ENCODE measurements at regions of chr9 and their contacts with region 1.

Region 1: GRCh38 chr9:134024828-134025605 is at the start of gene BRD3OS:
- DNase-seq: peak; percentile 98
- H3K4me3 ChIP-seq: peak within 1 kb of the TSS; percentile 62 to 84 (median 76)
- H3K27ac ChIP-seq: no peak within 1 kb of the TSS
- H3K4me1 ChIP-seq: peaks cover 5% of the 10 kb centered on the region
- H3K27me3 ChIP-seq: no peaks in the 10 kb centered on the region
- CTCF ChIP-seq: no peak
- POLR2A ChIP-seq: peak; percentile 43
- total RNA-seq, gene BRD3OS: 15.4 and 18.2 TPM in 2 replicates

Region 2: DNA sequence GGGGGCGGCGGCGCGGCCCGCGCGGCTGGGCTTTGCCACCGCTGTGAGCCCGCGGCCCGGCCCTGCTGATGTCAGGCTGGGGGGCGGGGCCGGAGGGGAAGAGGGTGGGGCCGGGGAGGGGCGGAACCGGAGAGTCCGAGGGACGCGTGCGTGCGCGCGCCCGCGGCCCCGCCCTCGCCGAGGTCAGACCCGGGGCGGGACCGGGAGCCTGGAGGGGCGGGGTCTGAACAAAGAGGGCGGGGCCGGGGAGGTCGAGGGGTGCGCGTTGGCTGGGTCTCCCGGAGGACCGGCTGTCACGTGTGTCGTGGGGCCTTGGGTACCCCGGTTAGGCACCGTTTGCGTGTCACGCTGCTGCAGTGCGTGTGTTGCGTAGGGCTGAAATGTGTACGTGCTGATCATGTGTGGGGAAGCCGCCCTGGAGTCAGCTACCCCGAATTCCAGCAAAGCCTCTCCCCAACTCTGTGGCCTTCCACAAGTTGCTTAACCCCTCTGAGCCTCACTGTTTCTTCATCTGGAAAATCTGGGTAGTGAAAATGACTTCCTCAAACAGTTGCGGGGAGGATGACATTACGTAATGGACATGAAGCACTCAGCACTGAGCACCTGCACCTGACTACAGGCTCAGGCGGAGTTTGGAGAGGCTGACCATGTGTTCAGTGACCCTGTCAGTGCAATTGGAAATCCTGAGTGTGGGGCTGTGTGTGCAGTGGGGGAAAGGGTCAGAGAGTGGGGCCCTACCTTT is 903.6 kb before region 1 on chr9 and contains the start of gene RALGDS:
- CTCF ChIA-PET with region 1: no interaction called
- POLR2A ChIA-PET with region 1: no interaction called
- dilution Hi-C with region 1: no loop called
- intact Hi-C with region 1: loop called (anchors 1 kb)
- DNase-seq: peak; percentile 73
- H3K4me3 ChIP-seq: peak within 1 kb of the TSS; percentile 34 to 45 (median 41)
- H3K27ac ChIP-seq: no peak within 1 kb of the TSS
- H3K4me1 ChIP-seq: peaks cover 30% of the 10 kb centered on the region
- H3K27me3 ChIP-seq: no peaks in the 10 kb centered on the region
- CTCF ChIP-seq: no peak
- POLR2A ChIP-seq: no peak
- total RNA-seq, gene RALGDS: 41.4 and 43.1 TPM in 2 replicates

Region 3: DNA sequence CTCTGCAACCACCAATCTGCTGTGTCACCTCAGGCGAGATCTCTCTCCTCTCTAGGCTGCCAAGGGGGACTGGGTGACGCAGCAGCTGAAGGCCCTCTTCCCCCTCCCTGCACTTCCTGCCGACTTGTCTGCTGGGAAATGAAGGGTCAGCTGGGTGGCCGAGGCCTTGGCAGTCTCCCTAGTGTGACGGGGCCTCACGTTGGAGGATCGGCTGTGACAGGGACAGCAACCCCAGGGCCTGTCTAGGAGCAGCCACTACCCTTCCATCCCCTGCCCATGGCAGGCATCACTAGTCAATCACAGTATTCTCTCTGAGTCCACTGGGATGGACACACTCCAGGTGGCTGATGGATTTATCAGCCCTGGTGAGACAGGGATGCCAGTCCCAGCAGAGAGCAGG is 179.6 kb before region 1 on chr9:
- CTCF ChIA-PET with region 1: no interaction called
- POLR2A ChIA-PET with region 1: interaction called, 5 read pairs
- dilution Hi-C with region 1: no loop called
- intact Hi-C with region 1: loop called (anchors 1 kb)
- DNase-seq: peak; percentile 86
- H3K4me3 ChIP-seq: no peak overlapping the region
- H3K27ac ChIP-seq: peak overlapping the region; percentile 92
- H3K4me1 ChIP-seq: peaks cover 24% of the 10 kb centered on the region
- H3K27me3 ChIP-seq: no peaks in the 10 kb centered on the region
- CTCF ChIP-seq: no peak
- POLR2A ChIP-seq: no peak

Region 4: DNA sequence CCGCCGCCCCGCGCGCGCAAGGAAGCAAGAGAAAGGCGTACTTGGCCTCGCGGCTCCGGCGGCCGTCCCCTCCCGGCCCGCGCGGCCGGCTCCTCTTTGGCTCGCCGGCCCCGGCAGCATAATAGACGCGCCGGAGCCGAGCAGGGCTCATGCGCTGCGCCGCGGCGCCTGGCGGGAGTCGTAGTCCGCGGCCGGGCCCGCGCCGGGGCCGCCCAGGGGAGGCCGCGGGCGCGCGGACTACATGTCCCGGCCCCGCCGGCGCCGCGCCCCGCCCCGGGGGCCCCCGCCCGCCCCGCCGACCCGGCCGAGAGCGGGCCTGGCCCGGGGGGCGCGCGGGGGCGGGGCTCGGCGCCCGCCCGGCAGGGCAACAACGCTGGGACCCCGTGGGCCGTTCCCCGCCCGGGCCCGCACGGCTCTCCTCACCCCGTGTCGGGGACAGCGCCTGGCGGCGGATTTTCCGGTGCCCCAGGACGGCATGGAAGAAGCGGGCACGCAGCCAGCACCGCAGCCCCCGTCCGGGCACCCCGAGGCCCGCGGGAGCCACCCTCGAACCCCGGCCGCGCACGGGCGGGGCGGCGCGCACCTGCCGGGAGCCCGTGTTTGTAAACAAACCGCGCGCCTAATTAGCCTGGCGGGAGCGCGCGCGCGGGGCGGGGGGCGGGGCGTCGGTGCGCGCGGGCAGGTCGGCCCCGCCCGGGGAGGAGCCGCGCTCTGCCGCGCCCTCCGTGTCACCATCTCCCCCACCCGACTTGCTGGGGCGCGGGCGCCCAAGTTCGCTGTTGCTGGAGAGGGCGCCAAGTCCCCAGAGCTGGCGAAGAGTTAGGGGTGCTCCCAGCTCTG is 43.1 kb after region 1 on chr9 and contains the start of gene BRD3:
- CTCF ChIA-PET with region 1: interaction called, 7 read pairs
- POLR2A ChIA-PET with region 1: no interaction called
- dilution Hi-C with region 1: no loop called
- intact Hi-C with region 1: loop called (anchors 1 kb)
- DNase-seq: peak; percentile 80
- H3K4me3 ChIP-seq: peak within 1 kb of the TSS; percentile 74 to 92 (median 79)
- H3K27ac ChIP-seq: peak within 1 kb of the TSS; percentile 55
- H3K4me1 ChIP-seq: peaks cover 12% of the 10 kb centered on the region
- H3K27me3 ChIP-seq: peaks cover 14 to 28% of the 10 kb centered on the region in 2 experiments
- CTCF ChIP-seq: no peak
- POLR2A ChIP-seq: peak; percentile 63
- total RNA-seq, gene BRD3: 47.1 and 54.1 TPM in 2 replicates